Natural killer cell (primary cell): ENCODE measurements at regions of chr1 and their contacts with region 1.

Region 1: GRCh38 chr1:153352523-153352922 is 3.9 kb upstream of the PGLYRP4 start:
- DNase-seq: peak; percentile 43 to 80
- ATAC-seq: peak; percentile 68 to 86 (median 69)
- H3K4me3 ChIP-seq: no peak overlapping the region
- H3K4me3 Mint-ChIP-seq: no peak overlapping the region
- H3K27ac ChIP-seq: no peak overlapping the region
- H3K27ac Mint-ChIP-seq: no peak overlapping the region
- H3K4me1 ChIP-seq: peaks cover 4% of the 10 kb centered on the region
- H3K4me1 Mint-ChIP-seq: no peaks in the 10 kb centered on the region
- H3K27me3 ChIP-seq: peaks cover 2% of the 10 kb centered on the region
- H3K27me3 Mint-ChIP-seq: peaks cover 19 to 25% of the 10 kb centered on the region in 2 donors
- CTCF ChIP-seq: peak; percentile 85

Region 2: GRCh38 chr1:153312570-153313193 is 39.8 kb before region 1 on chr1 and contains the start of gene PGLYRP3:
- intact Hi-C with region 1: no loop called
- DNase-seq: no peak
- ATAC-seq: no peak
- H3K4me3 ChIP-seq: no peak within 1 kb of the TSS
- H3K4me3 Mint-ChIP-seq: no peak within 1 kb of the TSS
- H3K27ac ChIP-seq: no peak within 1 kb of the TSS
- H3K27ac Mint-ChIP-seq: no peak within 1 kb of the TSS
- H3K4me1 ChIP-seq: no peaks in the 10 kb centered on the region
- H3K4me1 Mint-ChIP-seq: no peaks in the 10 kb centered on the region
- H3K27me3 ChIP-seq: no peaks in the 10 kb centered on the region
- H3K27me3 Mint-ChIP-seq: peaks cover 8 to 33% of the 10 kb centered on the region in 2 donors
- CTCF ChIP-seq: no peak
- total RNA-seq, gene PGLYRP3: not detected

Region 3: GRCh38 chr1:153404768-153405167 is 52.2 kb after region 1 on chr1:
- intact Hi-C with region 1: loop called (anchors 2 kb)
- DNase-seq: peak; percentile 24 to 67
- ATAC-seq: peak; percentile 55 to 78 (median 76)
- H3K4me3 ChIP-seq: no peak overlapping the region
- H3K4me3 Mint-ChIP-seq: no peak overlapping the region
- H3K27ac ChIP-seq: no peak overlapping the region
- H3K27ac Mint-ChIP-seq: no peak overlapping the region
- H3K4me1 ChIP-seq: peaks cover 2% of the 10 kb centered on the region
- H3K4me1 Mint-ChIP-seq: no peaks in the 10 kb centered on the region
- H3K27me3 ChIP-seq: no peaks in the 10 kb centered on the region
- H3K27me3 Mint-ChIP-seq: peaks cover 11 to 18% of the 10 kb centered on the region in 2 donors
- CTCF ChIP-seq: peak; percentile 39